BJ (cell line): ENCODE measurements at regions of chr12 and their contacts with region 1.

Region 1: DNA sequence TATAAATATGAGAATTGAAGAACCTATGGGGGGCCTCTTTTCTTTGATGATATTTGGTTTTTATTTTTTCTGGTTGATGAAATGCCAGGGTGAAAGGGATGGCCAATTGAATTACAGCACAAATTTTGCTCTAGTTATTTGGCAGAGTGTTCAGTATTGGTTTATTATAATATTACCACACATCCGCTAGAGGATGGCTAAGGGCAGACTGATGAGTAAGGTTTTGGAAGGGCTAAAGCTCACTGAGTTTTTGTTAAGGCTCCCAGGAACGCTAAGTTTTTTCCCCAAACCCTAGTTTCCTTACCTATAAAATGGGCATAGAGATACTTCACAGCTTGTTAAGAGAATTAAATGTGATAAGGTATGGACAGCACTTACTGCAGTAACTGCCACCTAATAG is 34.3 kb upstream of the LRRC10 start:
- DNase-seq: no peak
- H3K4me3 ChIP-seq: no peak overlapping the region
- H3K27me3 ChIP-seq: no peaks in the 10 kb centered on the region
- CTCF ChIP-seq: no peak

Region 2: GRCh38 chr12:69097619-69098368 is 547.2 kb before region 1 on chr12:
- CTCF ChIA-PET with region 1: no interaction called
- POLR2A ChIA-PET with region 1: no interaction called
- DNase-seq: no peak
- H3K4me3 ChIP-seq: no peak overlapping the region
- H3K27me3 ChIP-seq: no peaks in the 10 kb centered on the region; the same call in 1 of the 2 replicates
- CTCF ChIP-seq: no peak

Region 3: GRCh38 chr12:69359531-69360347 is 285.3 kb before region 1 on chr12 and contains the start of gene YEATS4:
- CTCF ChIA-PET with region 1: interaction called, 42 read pairs
- POLR2A ChIA-PET with region 1: no interaction called
- DNase-seq: peak; percentile 46
- H3K4me3 ChIP-seq: peak within 1 kb of the TSS; percentile 93
- H3K27me3 ChIP-seq: no peaks in the 10 kb centered on the region
- CTCF ChIP-seq: no peak
- polyA plus RNA-seq, gene YEATS4: 7.8 and 9.1 TPM in 2 replicates

Region 4: DNA sequence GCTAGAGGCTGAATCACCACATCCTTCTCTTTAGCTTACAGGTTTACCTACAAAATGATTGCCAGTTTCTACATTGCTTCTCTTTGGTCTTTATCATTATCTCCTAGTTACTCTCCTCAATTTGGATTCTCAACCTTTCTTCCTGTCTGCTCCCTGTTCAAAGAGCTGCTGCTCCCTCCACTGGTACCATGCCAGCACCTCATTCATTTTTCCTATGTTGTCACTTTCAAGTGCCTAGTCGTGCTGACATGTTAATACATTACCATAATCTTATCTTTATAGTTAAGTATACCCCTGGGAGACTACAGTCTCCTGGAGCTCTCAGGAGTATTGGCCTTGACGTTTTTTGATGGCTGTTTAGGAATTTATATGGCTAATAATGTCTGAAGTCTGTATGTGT is 160.6 kb before region 1 on chr12:
- CTCF ChIA-PET with region 1: no interaction called
- POLR2A ChIA-PET with region 1: no interaction called
- DNase-seq: no peak
- H3K4me3 ChIP-seq: no peak overlapping the region
- H3K27me3 ChIP-seq: no peaks in the 10 kb centered on the region
- CTCF ChIP-seq: no peak